PC-3 (cell line): ENCODE measurements at regions of chr4 and their contacts with region 1.

Region 1: DNA sequence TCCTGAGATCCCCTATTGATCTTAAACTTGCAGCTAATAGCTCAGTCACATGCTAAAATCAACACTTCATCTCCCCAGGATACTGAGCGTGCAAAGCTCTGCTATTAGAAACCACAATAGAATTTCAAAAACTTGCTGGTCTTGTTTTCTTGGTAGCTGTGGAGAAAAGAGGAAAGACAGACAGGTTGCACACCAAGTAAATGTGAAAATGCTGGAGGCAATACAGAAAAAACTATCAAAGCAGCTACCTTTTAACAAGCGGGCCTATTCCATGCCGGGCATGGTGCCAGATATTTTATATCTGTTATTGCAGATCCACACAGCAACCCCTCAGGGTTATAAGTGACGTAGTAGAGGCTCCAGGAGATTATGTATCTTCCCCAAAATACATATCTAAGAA is 171.9 kb downstream of the DCTD start:
- DNase-seq: peak; percentile 89
- ATAC-seq: peak; percentile 23
- H3K4me3 ChIP-seq: no peak overlapping the region
- H3K27ac ChIP-seq: peak overlapping the region; percentile 65
- H3K4me1 ChIP-seq: peaks cover 56% of the 10 kb centered on the region
- H3K27me3 ChIP-seq: no peaks in the 10 kb centered on the region
- CTCF ChIP-seq: no peak

Region 2: GRCh38 chr4:182642831-182643230 is 102.4 kb before region 1 on chr4:
- CTCF ChIA-PET with region 1: no interaction called
- POLR2A ChIA-PET with region 1: no interaction called
- intact Hi-C with region 1: loop called (anchors 10 kb)
- DNase-seq: peak; percentile 21
- ATAC-seq: no peak
- H3K4me3 ChIP-seq: no peak overlapping the region
- H3K27ac ChIP-seq: no peak overlapping the region
- H3K4me1 ChIP-seq: no peaks in the 10 kb centered on the region
- H3K27me3 ChIP-seq: no peaks in the 10 kb centered on the region
- CTCF ChIP-seq: peak; percentile 37; the same call in 1 of the 2 replicates

Region 3: GRCh38 chr4:183504064-183504929 is 759.1 kb after region 1 on chr4:
- CTCF ChIA-PET with region 1: no interaction called
- POLR2A ChIA-PET with region 1: no interaction called
- intact Hi-C with region 1: no loop called
- DNase-seq: peak; percentile 95
- ATAC-seq: peak; percentile 75
- H3K4me3 ChIP-seq: peak overlapping the region; percentile 93
- H3K27ac ChIP-seq: peak overlapping the region; percentile 65
- H3K4me1 ChIP-seq: peaks cover 14% of the 10 kb centered on the region
- H3K27me3 ChIP-seq: no peaks in the 10 kb centered on the region
- CTCF ChIP-seq: no peak